ENCODE measurements at regions of chr11 and their contacts with region 1.

Region 1: GRCh38 chr11:74948898-74949747 is at the starts of genes SPCS2 and XRRA1:
- DNase-seq: peak; percentile 96 to 99
- H3K4me3 ChIP-seq: peak within 1 kb of the TSS; percentile 64 to 90
- H3K27ac ChIP-seq: peak within 1 kb of the TSS; percentile 62 to 85
- H3K4me1 ChIP-seq: peaks cover 6 to 17% of the 10 kb centered on the region in 2 donors
- H3K27me3 ChIP-seq: no peaks in the 10 kb centered on the region
- CTCF ChIP-seq: no peak
- total RNA-seq, gene SPCS2: 13.0 TPM
- total RNA-seq, gene XRRA1: 11.4 TPM

Region 2: GRCh38 chr11:74748211-74749127 is 200.7 kb before region 1 on chr11 and contains the start of gene RNF169:
- intact Hi-C with region 1: loop called (anchors 5 kb)
- DNase-seq: peak; percentile 90 to 98
- H3K4me3 ChIP-seq: peak within 1 kb of the TSS; percentile 72 to 97
- H3K27ac ChIP-seq: peak within 1 kb of the TSS; percentile 89 to 91
- H3K4me1 ChIP-seq: peaks cover 0 to 16% of the 10 kb centered on the region in 2 donors
- H3K27me3 ChIP-seq: no peaks in the 10 kb centered on the region
- CTCF ChIP-seq: no peak
- total RNA-seq, gene RNF169: 19.5 TPM

Region 3: GRCh38 chr11:74988541-74989260 is 39.6 kb after region 1 on chr11 and contains the start of gene NEU3:
- intact Hi-C with region 1: loop called (anchors 2 kb)
- DNase-seq: peak; percentile 28 to 85
- H3K4me3 ChIP-seq: peak within 1 kb of the TSS; percentile 63 to 85
- H3K27ac ChIP-seq: peak within 1 kb of the TSS; percentile 70 to 79
- H3K4me1 ChIP-seq: peaks cover 0 to 3% of the 10 kb centered on the region in 2 donors
- H3K27me3 ChIP-seq: no peaks in the 10 kb centered on the region
- CTCF ChIP-seq: no peak
- total RNA-seq, gene NEU3: 2.9 TPM

Measured in ascending aorta (tissue), 2 donors.